ENCODE measurements at regions of chr14 and their contacts with region 1.

Region 1: GRCh38 chr14:96100161-96101029 is 61.2 kb downstream of the C14orf132 start:
- DNase-seq: peak; percentile 80
- ATAC-seq: peak; percentile 67
- H3K4me3 ChIP-seq: no peak overlapping the region
- H3K27ac ChIP-seq: no peak overlapping the region
- H3K4me1 ChIP-seq: peaks cover 8% of the 10 kb centered on the region
- H3K27me3 ChIP-seq: no peaks in the 10 kb centered on the region
- CTCF ChIP-seq: peak; percentile 88

Region 2: GRCh38 chr14:95998656-95999055 is 101.7 kb before region 1 on chr14:
- intact Hi-C with region 1: loop called (anchors 5 kb)
- DNase-seq: no peak
- ATAC-seq: peak; percentile 67
- H3K4me3 ChIP-seq: no peak overlapping the region
- H3K27ac ChIP-seq: no peak overlapping the region
- H3K4me1 ChIP-seq: no peaks in the 10 kb centered on the region
- H3K27me3 ChIP-seq: peaks cover 23% of the 10 kb centered on the region
- CTCF ChIP-seq: peak; percentile 47

Region 3: DNA sequence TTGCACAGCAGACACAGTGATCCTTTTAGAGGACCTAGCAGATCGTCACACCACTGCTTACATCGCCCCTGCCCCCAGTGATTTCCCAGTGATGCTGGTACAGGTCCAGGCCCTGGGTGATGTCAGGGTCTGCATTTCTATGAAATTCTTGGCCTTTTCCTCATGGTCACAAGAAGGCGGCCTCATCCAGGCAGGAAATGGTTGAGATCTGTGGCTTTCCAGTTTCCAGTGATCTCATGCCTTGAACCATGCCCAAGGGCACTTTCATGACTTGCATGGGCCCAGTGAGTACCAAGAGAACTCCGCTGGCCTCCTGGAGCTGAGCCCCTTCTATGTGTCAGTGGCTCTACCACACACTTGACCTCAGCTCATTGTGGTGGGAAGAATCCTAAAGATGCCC is 62.3 kb after region 1 on chr14:
- intact Hi-C with region 1: no loop called
- DNase-seq: no peak
- ATAC-seq: no peak
- H3K4me3 ChIP-seq: no peak overlapping the region
- H3K27ac ChIP-seq: no peak overlapping the region
- H3K4me1 ChIP-seq: no peaks in the 10 kb centered on the region
- H3K27me3 ChIP-seq: no peaks in the 10 kb centered on the region
- CTCF ChIP-seq: no peak

Region 4: GRCh38 chr14:96215452-96216244 is 115.3 kb after region 1 on chr14:
- intact Hi-C with region 1: no loop called
- DNase-seq: no peak
- ATAC-seq: no peak
- H3K4me3 ChIP-seq: no peak overlapping the region
- H3K27ac ChIP-seq: no peak overlapping the region
- H3K4me1 ChIP-seq: no peaks in the 10 kb centered on the region
- H3K27me3 ChIP-seq: no peaks in the 10 kb centered on the region
- CTCF ChIP-seq: no peak

Region 5: GRCh38 chr14:96275177-96276112 is 175.1 kb after region 1 on chr14:
- intact Hi-C with region 1: loop called (anchors 2 kb)
- DNase-seq: peak; percentile 87
- ATAC-seq: peak; percentile 83
- H3K4me3 ChIP-seq: no peak overlapping the region
- H3K27ac ChIP-seq: no peak overlapping the region
- H3K4me1 ChIP-seq: peaks cover 10% of the 10 kb centered on the region
- H3K27me3 ChIP-seq: no peaks in the 10 kb centered on the region
- CTCF ChIP-seq: peak; percentile 94

Measured in upper lobe of right lung (tissue), 1 donor.